CD4-positive, alpha-beta T cell (primary cell): ENCODE measurements at regions of chr2 and their contacts with region 1.

Region 1: GRCh38 chr2:208033758-208034502 is 8.6 kb upstream of the PLEKHM3 start:
- DNase-seq: peak in 9 of 14 experiments; percentile 4 to 62 (median 17)
- ATAC-seq: peak; percentile 56
- H3K4me3 ChIP-seq: no peak overlapping the region
- H3K4me3 Mint-ChIP-seq: no peak overlapping the region
- H3K27ac ChIP-seq: no peak overlapping the region
- H3K27ac Mint-ChIP-seq: no peak overlapping the region
- H3K4me1 ChIP-seq: no peaks in the 10 kb centered on the region
- H3K4me1 Mint-ChIP-seq: no peaks in the 10 kb centered on the region
- H3K27me3 ChIP-seq: no peaks in the 10 kb centered on the region
- H3K27me3 Mint-ChIP-seq: no peaks in the 10 kb centered on the region
- CTCF ChIP-seq: peak; percentile 40

Region 2: DNA sequence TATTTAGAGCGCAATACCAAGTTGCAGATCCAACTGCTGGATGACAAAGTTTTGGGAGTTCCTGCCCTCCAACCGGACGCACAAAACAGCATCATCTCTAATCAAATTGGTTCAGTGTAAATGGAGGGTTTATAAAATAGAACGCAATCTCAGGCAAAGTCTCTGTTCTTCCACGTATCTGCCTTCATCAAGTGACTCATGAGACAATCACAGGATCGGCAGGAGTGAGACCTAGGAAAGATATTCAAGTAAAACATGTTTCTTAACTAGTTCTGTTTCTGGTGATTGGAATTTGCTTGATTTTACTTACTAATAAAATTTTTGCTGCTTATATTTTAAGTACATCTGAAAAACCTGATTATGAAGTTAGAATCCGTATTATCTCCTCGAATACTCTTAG is 271.8 kb before region 1 on chr2:
- CTCF ChIA-PET with region 1: no interaction called
- POLR2A ChIA-PET with region 1: no interaction called
- intact Hi-C with region 1: loop called in 1 of 2 experiments (anchors 5 kb)
- DNase-seq: no peak
- ATAC-seq: no peak
- H3K4me3 ChIP-seq: no peak overlapping the region
- H3K4me3 Mint-ChIP-seq: no peak overlapping the region
- H3K27ac ChIP-seq: no peak overlapping the region
- H3K27ac Mint-ChIP-seq: no peak overlapping the region
- H3K4me1 ChIP-seq: peaks cover 7% of the 10 kb centered on the region
- H3K4me1 Mint-ChIP-seq: peaks cover 6% of the 10 kb centered on the region
- H3K27me3 ChIP-seq: peaks cover 8 to 30% of the 10 kb centered on the region in 2 experiments
- H3K27me3 Mint-ChIP-seq: peaks cover 46% of the 10 kb centered on the region
- CTCF ChIP-seq: no peak